ENCODE measurements at regions of chr9 and their contacts with region 1.

Region 1: GRCh38 chr9:126514047-126514821 is 99.5 kb upstream of the LMX1B start:
- DNase-seq: peak; percentile 74
- ATAC-seq: peak; percentile 85
- H3K4me3 Mint-ChIP-seq: no peak overlapping the region
- H3K27ac Mint-ChIP-seq: no peak overlapping the region
- H3K4me1 Mint-ChIP-seq: peaks cover 28% of the 10 kb centered on the region
- H3K27me3 Mint-ChIP-seq: peaks cover 54% of the 10 kb centered on the region

Region 2: DNA sequence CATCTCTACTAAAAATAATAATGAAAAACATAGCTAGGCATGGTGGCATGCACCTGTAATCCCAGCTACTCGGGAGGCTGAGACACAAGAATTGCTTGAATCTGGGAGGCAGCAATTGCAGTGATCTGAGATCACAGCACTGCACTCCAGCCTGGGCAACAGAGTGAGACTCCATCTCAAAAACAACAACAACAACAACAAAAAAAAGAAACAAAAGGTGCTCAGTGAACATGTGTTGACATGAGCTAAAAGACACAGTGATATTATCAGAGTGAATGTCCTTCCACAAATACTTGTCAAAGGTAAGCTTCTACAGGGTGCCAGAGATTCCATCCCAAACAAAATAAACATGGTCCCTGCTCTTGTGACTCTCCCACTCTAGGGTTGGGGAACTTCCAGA is 24.3 kb after region 1 on chr9:
- CTCF ChIA-PET with region 1: interaction called, 11 read pairs
- POLR2A ChIA-PET with region 1: no interaction called
- DNase-seq: no peak
- ATAC-seq: no peak
- H3K4me3 Mint-ChIP-seq: no peak overlapping the region
- H3K27ac Mint-ChIP-seq: no peak overlapping the region
- H3K4me1 Mint-ChIP-seq: no peaks in the 10 kb centered on the region
- H3K27me3 Mint-ChIP-seq: peaks cover 8% of the 10 kb centered on the region

Region 3: DNA sequence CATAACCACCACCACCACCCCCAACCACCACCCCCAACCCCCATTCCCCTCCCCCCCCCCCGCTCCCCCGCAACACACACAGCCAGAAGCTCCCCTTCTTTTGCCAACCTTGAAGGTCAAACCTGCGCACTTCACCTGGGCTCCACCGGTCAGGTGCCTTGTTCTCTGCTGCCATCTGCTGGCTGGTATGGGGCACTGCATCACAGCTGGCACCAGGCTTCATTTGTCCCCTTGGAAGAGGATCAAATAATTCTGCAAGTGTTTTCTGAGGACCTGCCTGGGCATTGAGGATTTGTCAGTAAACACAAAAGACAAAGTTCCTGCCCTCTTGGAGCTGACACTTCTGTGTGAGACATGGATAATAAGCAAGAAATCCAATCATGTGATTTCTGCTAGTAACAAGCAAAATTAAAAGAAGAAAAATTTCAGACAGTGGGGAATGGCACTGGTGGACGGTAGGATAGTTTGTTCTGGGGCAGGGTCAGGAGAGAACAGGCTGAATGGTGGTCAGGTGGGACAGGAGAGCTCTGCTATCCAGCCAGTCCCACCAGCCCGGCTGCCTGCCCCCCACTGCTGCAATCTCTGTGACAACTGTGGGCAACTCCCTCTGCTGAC is 43.9 kb after region 1 on chr9:
- CTCF ChIA-PET with region 1: interaction called, 42 read pairs
- POLR2A ChIA-PET with region 1: no interaction called
- DNase-seq: peak; percentile 81
- ATAC-seq: peak; percentile 90
- H3K4me3 Mint-ChIP-seq: no peak overlapping the region
- H3K27ac Mint-ChIP-seq: no peak overlapping the region
- H3K4me1 Mint-ChIP-seq: no peaks in the 10 kb centered on the region
- H3K27me3 Mint-ChIP-seq: peaks cover 25% of the 10 kb centered on the region

Measured in activated CD8-positive, alpha-beta T cell treated with anti-CD3 and anti-CD28 coated beads, Interleukin-2, amount 10 ng/mL, durations not matched to agents 7 days and 5 days (primary cell).